Activated CD4-positive, alpha-beta memory T cell treated with anti-CD3 and anti-CD28 coated beads for 36 hours (primary cell): ENCODE measurements at regions of chr6 and their contacts with region 1.

Region 1: DNA sequence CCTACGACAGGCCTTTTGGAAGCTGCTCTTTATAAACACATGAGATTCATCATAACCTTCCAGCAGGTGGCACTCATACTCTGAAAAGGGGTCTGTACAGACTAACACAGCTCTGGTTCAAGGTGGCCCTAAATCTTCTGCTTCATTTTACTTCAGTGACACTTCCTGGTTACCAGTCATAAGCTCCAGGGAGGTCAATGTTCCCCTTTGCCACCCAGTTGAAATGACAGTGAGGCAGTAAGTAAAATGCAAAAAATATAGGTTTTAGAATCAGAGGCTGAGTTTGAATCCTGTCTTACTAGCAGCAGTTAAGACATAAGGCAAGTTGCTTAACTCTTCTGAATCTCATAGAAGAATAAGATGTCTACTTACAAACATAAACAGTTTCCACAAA is 132.8 kb downstream of the CDK19 start:
- DNase-seq: peak; percentile 55
- H3K4me3 Mint-ChIP-seq: no peak overlapping the region
- H3K27ac Mint-ChIP-seq: peak overlapping the region; percentile 58
- H3K4me1 Mint-ChIP-seq: peaks cover 18% of the 10 kb centered on the region
- H3K27me3 Mint-ChIP-seq: no peaks in the 10 kb centered on the region

Region 2: GRCh38 chr6:110476046-110476849 is 206.2 kb before region 1 on chr6 and contains the start of gene SLC22A16:
- CTCF ChIA-PET with region 1: no interaction called
- POLR2A ChIA-PET with region 1: no interaction called
- intact Hi-C with region 1: no loop called
- DNase-seq: no peak
- H3K4me3 Mint-ChIP-seq: peak within 1 kb of the TSS; percentile 20
- H3K27ac Mint-ChIP-seq: no peak within 1 kb of the TSS
- H3K4me1 Mint-ChIP-seq: peaks cover 11% of the 10 kb centered on the region
- H3K27me3 Mint-ChIP-seq: peaks cover 35% of the 10 kb centered on the region
- total RNA-seq, gene SLC22A16: not detected

Region 3: DNA sequence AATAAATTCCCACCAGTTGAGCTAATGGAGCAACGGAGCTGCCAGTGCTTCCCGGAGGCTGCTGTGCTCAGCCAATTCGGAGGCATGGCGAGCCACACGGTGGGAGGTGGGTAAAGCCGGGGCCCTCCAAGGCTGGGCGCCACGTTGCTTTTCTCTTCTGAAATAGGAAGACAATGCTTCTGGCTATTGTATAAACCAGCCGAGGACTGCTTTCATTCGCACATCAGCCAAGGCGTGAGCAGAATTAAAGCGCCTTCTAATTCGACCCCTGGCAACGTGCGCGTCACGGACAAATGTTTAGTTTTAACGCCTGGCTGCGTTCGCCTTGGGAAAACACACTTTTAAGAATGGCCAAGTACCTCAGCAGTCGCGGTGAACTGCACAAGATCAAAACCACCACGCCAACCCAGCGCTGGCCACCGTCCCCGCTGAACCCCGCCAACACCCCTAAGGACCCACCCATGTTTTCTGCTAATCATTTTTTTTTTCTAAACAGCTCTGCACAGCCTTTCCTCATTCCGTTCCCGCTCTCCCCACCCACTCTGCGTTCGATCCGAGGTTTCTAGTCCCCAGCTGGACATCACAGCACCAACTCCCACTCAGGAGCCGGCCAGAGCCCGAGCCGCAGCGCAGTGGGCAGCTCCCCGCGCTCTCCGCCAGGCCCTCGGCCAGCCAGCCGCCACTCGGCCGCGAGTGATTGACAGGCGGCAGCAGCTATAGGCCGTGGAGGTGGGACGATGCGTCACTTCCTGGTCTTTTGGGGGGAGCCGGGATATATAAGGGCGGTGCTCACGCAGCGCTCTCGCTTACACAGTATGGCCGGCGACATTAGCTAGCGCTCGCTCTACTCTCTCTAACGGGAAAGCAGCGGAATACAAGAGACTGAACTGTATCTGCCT is 191.8 kb after region 1 on chr6 and contains the start of gene AMD1:
- CTCF ChIA-PET with region 1: interaction called, 46 read pairs
- POLR2A ChIA-PET with region 1: interaction called, 11 read pairs
- intact Hi-C with region 1: loop called (anchors 1 kb)
- DNase-seq: peak; percentile 96
- H3K4me3 Mint-ChIP-seq: peak within 1 kb of the TSS; percentile 96
- H3K27ac Mint-ChIP-seq: peak within 1 kb of the TSS; percentile 97
- H3K4me1 Mint-ChIP-seq: peaks cover 27% of the 10 kb centered on the region
- H3K27me3 Mint-ChIP-seq: no peaks in the 10 kb centered on the region
- total RNA-seq, gene AMD1: 79.1 to 84.3 TPM

Region 4: DNA sequence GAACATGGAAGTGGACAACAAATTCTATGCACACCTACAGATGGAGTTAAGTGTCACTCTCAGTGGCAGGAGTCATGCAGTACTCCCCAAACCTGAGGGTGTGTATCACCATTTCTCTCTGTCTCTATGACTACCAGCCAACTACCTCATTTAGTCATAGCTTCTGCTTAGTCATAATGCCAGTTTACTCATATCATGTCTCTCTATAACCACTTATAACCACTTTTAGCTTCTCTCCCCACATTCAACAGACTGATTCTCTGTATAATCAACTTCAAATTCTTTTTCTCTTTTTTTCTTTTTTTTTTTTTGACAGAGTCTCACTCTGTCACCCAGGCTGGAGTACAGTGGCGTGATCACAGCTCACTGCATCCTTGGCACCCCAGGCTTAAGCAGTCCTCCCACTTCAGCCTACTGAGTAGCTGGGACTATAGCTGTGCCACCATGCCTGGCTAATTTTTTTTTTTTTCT is 262.3 kb after region 1 on chr6:
- CTCF ChIA-PET with region 1: interaction called, 44 read pairs
- POLR2A ChIA-PET with region 1: interaction called, 3 read pairs
- intact Hi-C with region 1: loop called (anchors 1 kb)
- DNase-seq: peak; percentile 71
- H3K4me3 Mint-ChIP-seq: peak overlapping the region; percentile 16
- H3K27ac Mint-ChIP-seq: peak overlapping the region; percentile 71
- H3K4me1 Mint-ChIP-seq: peaks cover 10% of the 10 kb centered on the region
- H3K27me3 Mint-ChIP-seq: no peaks in the 10 kb centered on the region

Region 5: GRCh38 chr6:110981202-110981600 is 298.7 kb after region 1 on chr6:
- CTCF ChIA-PET with region 1: interaction called, 16 read pairs
- POLR2A ChIA-PET with region 1: interaction called, 4 read pairs
- intact Hi-C with region 1: loop called (anchors 1 kb)
- DNase-seq: no peak
- H3K4me3 Mint-ChIP-seq: peak overlapping the region; percentile 98
- H3K27ac Mint-ChIP-seq: peak overlapping the region; percentile 97
- H3K4me1 Mint-ChIP-seq: peaks cover 50% of the 10 kb centered on the region
- H3K27me3 Mint-ChIP-seq: no peaks in the 10 kb centered on the region

Region 6: GRCh38 chr6:111210194-111210728 is 527.8 kb after region 1 on chr6:
- CTCF ChIA-PET with region 1: no interaction called
- POLR2A ChIA-PET with region 1: no interaction called
- intact Hi-C with region 1: loop called (anchors 2 kb)
- DNase-seq: peak; percentile 11
- H3K4me3 Mint-ChIP-seq: no peak overlapping the region
- H3K27ac Mint-ChIP-seq: no peak overlapping the region
- H3K4me1 Mint-ChIP-seq: no peaks in the 10 kb centered on the region
- H3K27me3 Mint-ChIP-seq: no peaks in the 10 kb centered on the region